Psoas muscle (tissue), 8 donors: ENCODE measurements at regions of chr9 and their contacts with region 1.

Region 1: DNA sequence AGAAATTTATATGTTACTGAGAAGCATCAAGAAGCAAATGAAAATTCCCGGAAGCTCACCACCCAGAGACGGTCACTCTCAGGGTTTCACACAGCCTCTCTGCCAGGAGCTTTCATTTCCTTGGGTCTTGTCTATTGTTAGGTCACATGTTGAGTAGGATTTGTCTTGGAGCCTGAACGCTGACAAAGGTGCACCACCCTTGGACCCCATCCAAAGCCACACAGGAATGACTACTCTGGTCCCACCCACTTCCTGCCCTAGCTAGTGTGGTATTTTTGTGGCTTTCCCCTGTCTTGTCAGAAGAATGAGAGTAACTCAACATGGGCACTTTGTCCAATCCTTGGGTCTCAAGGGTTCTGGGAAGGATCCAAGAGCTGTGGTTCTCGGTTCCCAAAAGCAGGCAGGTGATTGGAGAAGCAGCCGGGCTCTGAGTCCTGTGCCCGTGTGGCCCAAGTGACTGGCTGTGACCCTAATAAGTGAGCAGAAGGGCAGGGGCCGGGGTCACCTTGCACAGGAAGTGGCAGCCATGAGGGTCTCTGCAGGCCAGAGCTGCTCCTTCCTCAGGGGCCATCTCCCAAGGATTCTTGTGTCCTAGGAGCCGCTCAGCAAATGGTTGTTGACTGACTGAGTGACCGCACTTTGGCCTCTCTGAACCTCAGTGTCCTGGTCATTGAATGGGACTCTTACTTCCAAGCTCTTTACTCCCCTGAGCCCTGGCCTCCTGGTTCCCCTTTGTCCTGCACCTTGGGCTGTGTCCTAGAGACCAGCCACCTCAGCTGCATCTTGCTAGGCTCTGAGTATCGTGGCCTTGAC is 6.9 kb downstream of the FGD3 start:
- DNase-seq: no peak
- ATAC-seq: peak in 1 of 4 donors; percentile 28
- H3K4me3 ChIP-seq: no peak overlapping the region
- H3K27ac ChIP-seq: no peak overlapping the region
- H3K4me1 ChIP-seq: no peaks in the 10 kb centered on the region
- H3K27me3 ChIP-seq: no peaks in the 10 kb centered on the region
- CTCF ChIP-seq: no peak

Region 2: GRCh38 chr9:92877531-92878430 is 76.5 kb before region 1 on chr9 and contains the start of gene ZNF484:
- intact Hi-C with region 1: loop called in 1 of 2 experiments (anchors 5 kb)
- DNase-seq: peak; percentile 96 to 98
- ATAC-seq: peak; percentile 99 to 100 (median 100)
- H3K4me3 ChIP-seq: peak within 1 kb of the TSS; percentile 79
- H3K27ac ChIP-seq: peak within 1 kb of the TSS; percentile 81
- H3K4me1 ChIP-seq: no peaks in the 10 kb centered on the region
- H3K27me3 ChIP-seq: no peaks in the 10 kb centered on the region
- CTCF ChIP-seq: no peak
- total RNA-seq, gene ZNF484: 3.9 to 6.1 (median 4.2) TPM